ENCODE measurements at regions of chr16 and their contacts with region 1.

Region 1: GRCh38 chr16:10737068-10737625 is 6.5 kb upstream of the NUBP1 start:
- DNase-seq: peak; percentile 76
- ATAC-seq: peak; percentile 68
- H3K4me3 ChIP-seq: peak overlapping the region; percentile 11 to 59 (median 13); a peak in 4 of 6 replicates
- H3K27ac ChIP-seq: no peak overlapping the region
- H3K4me1 ChIP-seq: peaks cover 29% of the 10 kb centered on the region
- H3K27me3 ChIP-seq: no peaks in the 10 kb centered on the region
- CTCF ChIP-seq: peak; percentile 93
- EP300 ChIP-seq: no peak
- POLR2A ChIP-seq: no peak
- RAD21 ChIP-seq: peak; percentile 96

Region 2: GRCh38 chr16:10256784-10257641 is 480.1 kb before region 1 on chr16:
- CTCF ChIA-PET with region 1: interaction called, 3 read pairs
- POLR2A ChIA-PET with region 1: no interaction called
- in situ Hi-C with region 1: loop called (anchors 5 kb)
- intact Hi-C with region 1: loop called (anchors 1 kb)
- DNase-seq: peak; percentile 91
- ATAC-seq: peak; percentile 93
- H3K4me3 ChIP-seq: peak overlapping the region; percentile 41 to 66 (median 52)
- H3K27ac ChIP-seq: peak overlapping the region; percentile 83
- H3K4me1 ChIP-seq: peaks cover 51% of the 10 kb centered on the region
- H3K27me3 ChIP-seq: no peaks in the 10 kb centered on the region
- CTCF ChIP-seq: peak; percentile 92
- EP300 ChIP-seq: peak; percentile 22 to 86; a peak in 3 of 4 replicates
- POLR2A ChIP-seq: peak in 1 of 2 experiments; percentile 17; a peak in 1 of 4 replicates
- RAD21 ChIP-seq: peak; percentile 98

Region 3: DNA sequence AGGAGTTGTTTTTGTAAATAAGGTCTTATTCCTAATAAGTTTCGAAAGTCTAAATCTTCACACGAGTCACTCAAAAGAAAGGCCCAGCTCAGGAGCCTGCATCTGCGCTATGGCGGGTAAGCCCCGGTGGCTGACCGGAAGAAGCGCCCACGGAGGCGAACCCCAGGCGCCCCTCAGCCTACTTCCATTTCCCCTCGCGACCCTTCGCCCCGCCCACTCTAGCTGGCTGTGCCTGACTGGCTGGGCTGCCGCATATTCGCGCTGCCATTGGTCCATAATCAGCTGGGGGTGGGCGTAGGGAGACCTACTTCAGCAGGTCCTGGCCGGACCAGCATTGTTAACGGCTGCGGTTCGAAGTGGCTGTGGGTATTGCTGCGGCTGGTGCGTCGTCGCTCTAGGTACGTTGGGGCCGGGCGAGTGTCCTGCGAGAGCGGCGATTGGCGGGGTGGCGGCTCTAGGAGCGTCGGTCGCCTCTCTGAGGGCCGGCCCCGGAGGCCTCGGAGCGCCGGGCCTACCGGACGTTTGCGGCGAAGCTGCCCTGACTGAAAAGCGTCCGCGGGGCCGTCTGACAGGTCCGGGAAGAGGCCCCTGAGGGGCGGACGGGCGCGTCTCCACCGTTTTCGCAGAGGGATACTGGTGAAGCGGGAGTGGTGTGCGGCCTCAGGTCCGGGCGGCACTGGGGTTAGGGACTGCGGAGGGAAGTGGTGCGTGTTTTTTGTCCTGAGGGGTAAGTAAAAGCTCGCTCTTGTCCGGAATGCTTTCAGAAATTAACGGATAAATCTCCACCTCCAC is 351.2 kb before region 1 on chr16 and contains the start of gene ATF7IP2:
- CTCF ChIA-PET with region 1: no interaction called
- POLR2A ChIA-PET with region 1: interaction called, 5 read pairs
- in situ Hi-C with region 1: no loop called
- intact Hi-C with region 1: loop called (anchors 10 kb)
- DNase-seq: peak; percentile 98
- ATAC-seq: peak; percentile 98
- H3K4me3 ChIP-seq: peak within 1 kb of the TSS; percentile 88 to 95 (median 91)
- H3K27ac ChIP-seq: peak within 1 kb of the TSS; percentile 76
- H3K4me1 ChIP-seq: peaks cover 58% of the 10 kb centered on the region
- H3K27me3 ChIP-seq: no peaks in the 10 kb centered on the region; a peak in 1 of 5 replicates
- CTCF ChIP-seq: peak; percentile 5; the same call in 1 of the 2 replicates
- EP300 ChIP-seq: peak; percentile 36 to 90; a peak in 3 of 4 replicates
- POLR2A ChIP-seq: peak; percentile 100
- RAD21 ChIP-seq: peak; percentile 82
- total RNA-seq, gene ATF7IP2: 98.1 and 117 TPM in 2 replicates

Region 4: DNA sequence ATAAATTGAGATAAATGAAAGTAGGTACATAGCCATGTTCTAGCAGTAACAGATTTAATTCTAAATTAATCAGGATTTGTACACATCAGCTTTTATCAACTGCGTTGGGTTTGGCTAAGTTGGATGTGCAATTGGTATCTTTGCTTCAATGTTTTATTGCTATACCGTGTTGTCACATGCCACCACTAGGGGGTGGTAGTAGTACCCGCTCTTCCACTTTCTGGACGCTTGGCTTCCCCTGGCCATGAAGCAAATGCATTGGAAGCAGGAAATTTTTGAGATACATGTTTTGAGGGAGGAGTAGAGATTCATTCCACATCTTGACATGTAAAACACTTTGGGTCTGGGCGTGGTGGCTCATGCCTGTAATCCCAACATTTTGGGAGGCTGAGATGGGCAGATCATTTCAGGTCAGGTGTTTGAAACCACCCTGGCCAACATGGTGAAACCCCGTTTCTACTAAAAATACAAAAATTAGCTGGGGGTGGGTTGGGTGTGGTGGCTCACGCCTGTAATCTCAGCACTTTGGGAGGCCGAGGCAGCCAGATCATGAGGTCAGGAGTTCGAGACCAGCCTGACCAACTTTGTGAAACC is 215.4 kb before region 1 on chr16:
- CTCF ChIA-PET with region 1: interaction called, 136 read pairs
- POLR2A ChIA-PET with region 1: interaction called, 6 read pairs
- in situ Hi-C with region 1: loop called (anchors 5 kb)
- intact Hi-C with region 1: loop called (anchors 1 kb)
- DNase-seq: peak; percentile 79
- ATAC-seq: peak; percentile 42
- H3K4me3 ChIP-seq: no peak overlapping the region
- H3K27ac ChIP-seq: no peak overlapping the region
- H3K4me1 ChIP-seq: peaks cover 27% of the 10 kb centered on the region
- H3K27me3 ChIP-seq: no peaks in the 10 kb centered on the region
- CTCF ChIP-seq: peak; percentile 93
- EP300 ChIP-seq: no peak
- POLR2A ChIP-seq: no peak
- RAD21 ChIP-seq: peak; percentile 58; the same call in 1 of the 2 replicates

Region 5: GRCh38 chr16:10579965-10580882 is 156.9 kb before region 1 on chr16 and contains the start of gene EMP2:
- CTCF ChIA-PET with region 1: interaction called, 19 read pairs
- POLR2A ChIA-PET with region 1: interaction called, 3 read pairs
- in situ Hi-C with region 1: no loop called
- intact Hi-C with region 1: loop called (anchors 1 kb)
- DNase-seq: peak; percentile 84
- ATAC-seq: peak; percentile 92
- H3K4me3 ChIP-seq: peak within 1 kb of the TSS; percentile 79 to 93 (median 79)
- H3K27ac ChIP-seq: peak within 1 kb of the TSS; percentile 56
- H3K4me1 ChIP-seq: peaks cover 59% of the 10 kb centered on the region
- H3K27me3 ChIP-seq: peaks cover 0 to 3% of the 10 kb centered on the region in 2 experiments; a peak in 1 of 5 replicates
- CTCF ChIP-seq: peak; percentile 97
- EP300 ChIP-seq: peak; percentile 27 to 46; a peak in 1 of 4 replicates
- POLR2A ChIP-seq: peak; percentile 43 to 88
- RAD21 ChIP-seq: peak; percentile 91
- total RNA-seq, gene EMP2: 13.4 and 24.6 TPM in 2 replicates

Region 6: GRCh38 chr16:10668322-10669045 is 68.7 kb before region 1 on chr16:
- CTCF ChIA-PET with region 1: interaction called, 13 read pairs
- POLR2A ChIA-PET with region 1: no interaction called
- in situ Hi-C with region 1: no loop called
- intact Hi-C with region 1: loop called (anchors 1 kb)
- DNase-seq: peak; percentile 64
- ATAC-seq: peak; percentile 98
- H3K4me3 ChIP-seq: peak overlapping the region in 1 of 3 experiments; percentile 23; a peak in 1 of 6 replicates
- H3K27ac ChIP-seq: no peak overlapping the region
- H3K4me1 ChIP-seq: peaks cover 18% of the 10 kb centered on the region
- H3K27me3 ChIP-seq: peaks cover 2 to 5% of the 10 kb centered on the region in 2 experiments; a peak in 3 of 5 replicates
- CTCF ChIP-seq: peak; percentile 93
- EP300 ChIP-seq: no peak
- POLR2A ChIP-seq: no peak
- RAD21 ChIP-seq: peak; percentile 77

Region 7: DNA sequence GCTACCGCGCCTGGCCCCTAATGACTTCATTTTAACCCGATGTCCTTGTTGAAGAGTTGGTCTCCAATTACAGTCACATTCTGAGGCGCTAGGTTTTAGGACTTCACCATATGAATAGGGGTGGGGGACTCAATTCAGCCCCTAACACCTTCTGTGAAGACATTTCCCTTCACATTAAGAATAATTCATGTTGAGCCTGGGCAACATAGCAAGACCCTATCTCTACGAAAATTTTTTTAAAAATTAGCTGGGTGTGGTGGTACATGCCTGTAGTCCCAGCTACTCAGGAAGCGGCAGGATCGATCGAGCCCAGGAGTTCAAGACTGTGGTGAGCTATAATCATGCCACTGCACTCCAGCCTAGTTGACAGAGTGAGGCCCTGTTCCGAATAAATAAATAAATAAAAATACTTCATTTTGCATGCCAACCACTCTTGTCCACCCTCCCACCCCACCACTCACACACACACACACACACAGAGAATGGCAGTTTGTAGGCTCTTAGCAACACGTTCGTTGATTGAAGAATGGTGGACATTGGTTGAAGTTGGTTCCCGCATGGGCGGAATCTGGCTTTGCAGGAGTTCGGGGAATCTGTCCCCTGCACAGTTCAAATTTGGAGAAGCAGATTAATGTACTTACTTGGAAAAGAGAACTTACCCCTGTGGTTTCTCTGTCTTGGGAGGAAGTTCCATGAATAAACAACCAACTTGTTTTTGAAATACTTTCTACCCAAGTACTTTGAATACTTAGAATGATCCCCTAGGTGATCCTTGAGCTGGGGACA is 109.3 kb after region 1 on chr16:
- CTCF ChIA-PET with region 1: no interaction called
- POLR2A ChIA-PET with region 1: no interaction called
- in situ Hi-C with region 1: no loop called
- intact Hi-C with region 1: no loop called
- DNase-seq: no peak
- ATAC-seq: no peak
- H3K4me3 ChIP-seq: no peak overlapping the region
- H3K27ac ChIP-seq: no peak overlapping the region
- H3K4me1 ChIP-seq: peaks cover 6% of the 10 kb centered on the region; the same call in 1 of the 2 replicates
- H3K27me3 ChIP-seq: peaks cover 0 to 25% of the 10 kb centered on the region in 2 experiments; a peak in 4 of 5 replicates
- CTCF ChIP-seq: no peak
- EP300 ChIP-seq: no peak
- POLR2A ChIP-seq: no peak
- RAD21 ChIP-seq: no peak

Measured in HepG2 (cell line).